ENCODE measurements at regions of chr2 and their contacts with region 1.

Region 1: DNA sequence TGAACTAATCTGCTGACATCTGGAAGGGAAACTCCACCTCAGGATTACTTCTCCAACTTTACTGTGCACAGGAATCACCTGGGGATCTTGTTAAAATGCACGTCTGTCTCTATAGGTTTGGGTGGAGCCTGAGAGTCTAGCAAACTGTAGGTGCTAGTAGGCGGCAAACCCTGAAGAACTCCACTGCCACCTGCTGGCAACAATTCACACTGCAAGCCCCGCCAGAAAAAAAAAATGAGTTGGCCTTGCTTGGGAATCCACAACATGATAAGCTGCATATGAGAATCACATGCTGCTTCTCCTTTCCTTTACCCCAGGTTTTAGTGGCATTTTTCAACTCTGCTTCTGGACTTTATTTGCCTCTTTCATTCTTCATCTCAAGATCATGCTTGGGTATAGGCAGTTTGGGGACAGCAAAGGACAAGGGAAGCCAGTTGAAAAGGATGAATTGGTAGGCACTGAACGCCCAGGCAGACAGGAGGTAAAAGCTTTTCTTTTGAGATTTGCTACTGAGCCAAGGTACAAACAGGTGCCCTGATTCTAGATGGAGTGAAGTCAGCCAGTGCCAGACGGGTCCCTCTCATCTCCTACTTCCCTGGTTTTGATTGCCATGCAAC is 88.8 kb downstream of the VIT start:
- DNase-seq: no peak
- ATAC-seq: peak; percentile 53

Region 2: GRCh38 chr2:36695746-36696415 is 89.4 kb before region 1 on chr2:
- intact Hi-C with region 1: loop called (anchors 5 kb)
- DNase-seq: no peak
- ATAC-seq: peak; percentile 77

Region 3: DNA sequence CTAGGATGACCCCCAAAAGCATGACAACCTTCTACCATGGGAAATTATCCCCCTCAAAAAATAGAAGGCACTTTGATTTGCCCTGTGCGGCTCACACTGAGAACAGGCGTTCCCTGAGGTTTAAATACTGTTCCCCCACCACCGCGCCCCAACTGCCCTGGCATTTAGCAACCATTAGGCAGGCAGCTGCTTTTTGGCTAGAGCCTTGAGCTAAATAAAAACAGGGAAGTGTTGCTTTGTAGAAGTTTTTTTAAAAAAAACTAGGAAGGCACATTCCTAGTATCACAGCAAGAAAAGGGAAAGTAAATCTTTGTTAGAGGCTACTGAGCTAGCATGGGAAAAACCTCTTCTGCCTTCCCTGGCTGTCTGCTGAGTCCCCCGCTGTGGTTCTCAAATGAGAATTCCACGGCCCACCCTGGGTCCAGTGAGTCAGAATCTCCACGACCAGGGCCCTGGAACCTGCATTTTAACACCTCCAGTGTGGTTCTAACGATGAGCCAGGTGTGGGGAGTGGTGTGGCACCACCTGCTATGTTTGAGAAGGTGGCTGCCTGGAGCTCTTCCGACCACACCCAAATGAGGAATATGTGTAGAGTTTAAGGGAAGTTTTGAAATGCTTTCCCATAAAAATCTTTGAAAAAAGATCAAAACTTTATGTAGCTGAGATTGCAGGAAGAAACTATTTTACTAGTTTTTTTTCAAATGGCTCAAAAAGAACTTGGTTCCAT is 22.4 kb before region 1 on chr2:
- intact Hi-C with region 1: no loop called
- DNase-seq: no peak
- ATAC-seq: no peak

Region 4: DNA sequence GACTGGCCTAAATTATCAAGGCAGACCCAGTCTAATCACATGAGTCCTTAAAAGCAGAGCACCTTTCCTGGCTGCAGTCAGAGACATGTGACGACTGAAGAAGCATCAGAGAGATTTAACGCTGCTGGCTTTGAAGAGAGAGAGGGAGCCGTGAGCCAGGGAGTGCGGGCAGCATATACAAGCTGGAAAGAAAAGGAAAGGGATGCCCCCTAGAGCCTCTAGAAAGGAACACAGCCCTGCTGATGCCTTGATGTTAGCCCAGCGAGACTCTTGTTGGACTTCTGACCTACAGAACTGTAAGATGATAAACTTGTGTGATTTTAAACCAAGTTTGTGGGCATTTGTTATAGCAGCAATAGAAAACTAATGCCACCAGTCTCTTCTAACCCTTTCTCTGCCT is 240.8 kb after region 1 on chr2:
- intact Hi-C with region 1: loop called (anchors 10 kb)
- DNase-seq: no peak
- ATAC-seq: no peak

Measured in Right ventricle myocardium inferior (tissue), 1 donor.